GM10248 (cell line): ENCODE measurements at regions of chr3 and their contacts with region 1.

Region 1: DNA sequence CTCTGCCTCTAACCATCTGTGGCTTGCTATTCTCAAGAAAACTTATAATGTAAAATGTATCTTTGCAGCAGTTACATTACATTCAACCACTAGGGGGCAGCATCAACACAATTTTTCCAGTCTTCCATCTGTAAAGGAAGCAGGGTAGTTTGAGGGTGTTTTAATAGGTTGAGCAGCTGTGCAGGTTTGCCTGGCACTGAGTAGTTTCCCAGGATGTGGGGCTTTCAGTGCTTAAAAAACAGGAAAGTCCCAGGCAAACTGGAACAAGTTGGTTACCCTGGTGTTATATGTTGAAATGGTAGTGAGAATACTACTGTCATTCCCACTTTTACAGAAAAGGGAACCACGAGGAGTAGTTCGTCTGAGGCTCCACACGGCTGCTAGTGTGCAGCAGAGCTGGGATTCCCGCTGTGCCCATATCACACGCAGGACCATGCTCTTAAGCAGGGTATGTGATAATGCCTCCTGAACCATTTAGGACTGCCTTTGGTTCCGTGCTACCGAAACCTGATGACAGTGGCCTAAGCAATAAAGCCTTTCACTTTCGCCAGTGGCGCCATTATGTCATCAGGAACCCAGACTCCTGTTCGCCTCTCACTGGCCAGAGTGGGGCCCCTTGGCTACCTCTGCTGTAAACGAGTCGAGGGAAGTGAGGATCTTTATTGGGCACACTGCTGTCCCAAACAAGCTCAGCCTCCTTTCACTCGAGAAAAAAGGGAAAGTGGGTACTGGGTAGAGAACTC is 64.7 kb upstream of the ZBTB38 start:
- DNase-seq: peak; percentile 78
- CTCF ChIP-seq: peak; percentile 63

Region 2: DNA sequence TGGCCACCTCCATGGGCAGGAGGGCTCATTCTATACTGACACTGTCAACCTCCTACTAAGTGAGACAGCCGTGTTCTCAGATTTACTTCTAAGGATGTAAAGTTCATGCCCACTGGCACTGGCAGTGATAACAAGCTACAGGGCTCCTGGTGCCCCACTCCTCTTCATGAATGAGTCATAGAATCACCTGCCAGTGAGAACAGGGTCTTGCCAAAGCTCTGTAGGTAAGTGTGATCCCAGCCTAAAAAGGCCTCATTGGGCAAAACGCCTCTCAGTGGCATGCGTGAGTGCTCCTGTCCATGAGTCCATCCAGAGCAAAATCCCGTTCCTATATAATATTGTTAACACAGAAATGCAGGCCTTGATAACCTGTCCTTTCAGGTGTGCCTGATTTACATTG is 54.6 kb before region 1 on chr3:
- CTCF ChIA-PET with region 1: no interaction called
- POLR2A ChIA-PET with region 1: no interaction called
- DNase-seq: no peak
- CTCF ChIP-seq: no peak

Region 3: GRCh38 chr3:141321109-141321497 is 17.5 kb after region 1 on chr3:
- CTCF ChIA-PET with region 1: interaction called, 12 read pairs
- POLR2A ChIA-PET with region 1: no interaction called
- DNase-seq: no peak
- CTCF ChIP-seq: no peak

Region 4: GRCh38 chr3:141336672-141337522 is 33.2 kb after region 1 on chr3:
- CTCF ChIA-PET with region 1: interaction called, 16 read pairs
- POLR2A ChIA-PET with region 1: no interaction called
- DNase-seq: peak; percentile 78
- CTCF ChIP-seq: no peak

Region 5: DNA sequence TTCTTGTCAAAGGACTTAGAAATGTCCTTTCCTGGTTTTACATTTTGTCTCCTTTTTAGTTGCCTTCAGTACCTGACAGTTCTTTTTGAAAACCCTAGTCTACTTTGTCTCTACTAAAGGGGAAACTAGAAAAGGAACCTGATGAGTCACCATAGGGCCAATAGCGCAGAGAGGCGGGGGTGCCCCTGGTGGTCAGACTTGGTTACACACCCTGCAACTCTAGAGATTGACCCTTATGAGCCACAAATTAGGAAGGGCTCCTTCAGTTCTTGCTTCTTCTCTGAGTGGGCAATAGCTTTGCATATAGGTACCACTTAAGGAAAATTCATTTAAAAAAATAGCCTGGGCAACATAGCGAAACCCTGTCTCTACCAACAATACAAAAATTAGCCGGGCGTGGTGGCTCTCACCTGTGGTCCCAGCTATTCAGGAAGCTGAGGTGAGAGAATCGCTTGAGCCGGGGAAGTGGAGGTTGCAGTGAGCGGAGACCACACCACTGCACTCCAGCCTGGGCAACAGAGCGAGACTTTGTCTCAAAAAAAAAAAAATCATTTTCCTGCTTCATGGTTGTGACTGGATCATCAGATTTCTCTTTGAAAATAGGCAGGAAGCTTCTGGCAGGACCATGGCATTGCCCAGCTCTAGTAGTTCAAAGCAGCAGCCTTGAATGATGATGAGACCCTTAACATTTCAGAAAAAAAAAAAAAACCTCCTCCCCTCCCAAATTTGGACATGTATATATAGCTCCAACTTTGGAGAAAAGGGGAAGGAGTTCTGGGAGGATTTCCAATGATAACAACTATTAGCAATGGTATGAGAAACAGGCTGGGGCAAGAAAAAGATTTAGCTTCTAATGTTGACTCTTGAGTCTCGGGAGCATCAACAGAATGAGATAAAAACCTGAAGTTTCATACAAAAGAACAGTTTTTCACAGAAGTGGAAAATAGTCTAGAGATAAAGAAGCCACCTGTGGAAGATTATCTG is 138.0 kb after region 1 on chr3:
- CTCF ChIA-PET with region 1: interaction called, 60 read pairs
- POLR2A ChIA-PET with region 1: no interaction called
- DNase-seq: peak; percentile 85
- CTCF ChIP-seq: peak; percentile 63

Region 6: GRCh38 chr3:141561426-141562034 is 257.9 kb after region 1 on chr3:
- CTCF ChIA-PET with region 1: interaction called, 20 read pairs
- POLR2A ChIA-PET with region 1: no interaction called
- DNase-seq: peak; percentile 27
- CTCF ChIP-seq: peak; percentile 86